Naive thymus-derived CD4-positive, alpha-beta T cell (primary cell): ENCODE measurements at regions of chr2 and their contacts with region 1.

Region 1: DNA sequence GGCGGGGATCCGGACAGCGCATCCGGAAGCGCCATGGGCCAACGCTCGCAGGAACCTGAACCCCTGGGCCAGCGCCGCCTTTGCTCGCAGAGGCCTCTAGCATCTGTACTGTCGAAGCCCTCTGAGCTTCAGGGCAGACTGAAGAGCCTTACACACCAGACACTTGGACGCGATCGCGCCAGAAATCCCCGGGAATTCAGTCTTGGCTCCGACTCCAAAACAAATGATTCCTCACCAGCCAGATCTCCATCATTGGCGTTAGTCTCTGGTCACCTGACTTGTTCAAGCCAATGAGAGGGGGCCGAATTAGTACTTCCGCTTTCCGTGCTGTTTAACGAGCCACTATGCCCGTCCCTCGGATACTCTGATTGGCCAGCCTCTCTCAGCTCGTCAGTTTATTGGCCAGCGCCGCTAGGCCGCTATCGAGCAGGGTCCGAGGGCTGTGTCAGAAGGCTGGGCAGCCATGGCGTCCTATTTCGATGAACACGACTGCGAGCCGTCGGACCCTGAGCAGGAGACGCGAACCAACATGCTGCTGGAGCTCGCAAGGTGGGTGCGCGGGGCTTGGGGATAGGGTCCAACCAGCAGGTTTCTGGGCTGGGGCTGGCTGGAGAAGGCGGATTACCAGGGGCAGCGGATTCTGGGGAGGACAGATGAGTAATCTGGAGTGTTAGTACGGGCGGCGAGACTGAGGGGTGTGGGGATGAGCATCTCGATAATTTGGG is at the start of gene RNF181:
- DNase-seq: peak; percentile 65 to 95 (median 90)
- ATAC-seq: peak; percentile 99
- H3K4me3 ChIP-seq: peak within 1 kb of the TSS; percentile 89
- H3K4me3 Mint-ChIP-seq: peak within 1 kb of the TSS; percentile 93 to 100 (median 98)
- H3K27ac ChIP-seq: peak within 1 kb of the TSS; percentile 88
- H3K27ac Mint-ChIP-seq: peak within 1 kb of the TSS; percentile 93 to 99 (median 97)
- H3K4me1 ChIP-seq: peaks cover 15 to 16% of the 10 kb centered on the region in 2 donors
- H3K4me1 Mint-ChIP-seq: peaks cover 25 to 48% (median 35%) of the 10 kb centered on the region in 7 donors
- H3K27me3 ChIP-seq: no peaks in the 10 kb centered on the region
- H3K27me3 Mint-ChIP-seq: no peaks in the 10 kb centered on the region
- total RNA-seq, gene RNF181: 38.5 to 118 (median 61.4) TPM

Region 2: GRCh38 chr2:84999553-84999955 is 595.9 kb before region 1 on chr2:
- CTCF ChIA-PET with region 1: no interaction called
- POLR2A ChIA-PET with region 1: no interaction called
- intact Hi-C with region 1: no loop called
- DNase-seq: no peak
- ATAC-seq: no peak
- H3K4me3 ChIP-seq: no peak overlapping the region
- H3K4me3 Mint-ChIP-seq: peak overlapping the region in 3 of 10 donors; percentile 23 to 47 (median 30)
- H3K27ac ChIP-seq: no peak overlapping the region
- H3K27ac Mint-ChIP-seq: peak overlapping the region in 7 of 9 donors; percentile 3 to 85 (median 60)
- H3K4me1 ChIP-seq: peaks cover 14 to 16% of the 10 kb centered on the region in 2 donors
- H3K4me1 Mint-ChIP-seq: peaks cover 29 to 82% (median 70%) of the 10 kb centered on the region in 7 donors
- H3K27me3 ChIP-seq: no peaks in the 10 kb centered on the region
- H3K27me3 Mint-ChIP-seq: no peaks in the 10 kb centered on the region

Region 3: GRCh38 chr2:85015653-85016360 is 579.7 kb before region 1 on chr2:
- CTCF ChIA-PET with region 1: no interaction called
- POLR2A ChIA-PET with region 1: no interaction called
- intact Hi-C with region 1: no loop called
- DNase-seq: no peak
- ATAC-seq: no peak
- H3K4me3 ChIP-seq: no peak overlapping the region
- H3K4me3 Mint-ChIP-seq: no peak overlapping the region
- H3K27ac ChIP-seq: peak overlapping the region; percentile 52
- H3K27ac Mint-ChIP-seq: peak overlapping the region in 8 of 9 donors; percentile 1 to 79 (median 60)
- H3K4me1 ChIP-seq: peaks cover 2 to 26% of the 10 kb centered on the region in 2 donors
- H3K4me1 Mint-ChIP-seq: peaks cover 58 to 86% (median 74%) of the 10 kb centered on the region in 7 donors
- H3K27me3 ChIP-seq: no peaks in the 10 kb centered on the region
- H3K27me3 Mint-ChIP-seq: no peaks in the 10 kb centered on the region

Region 4: GRCh38 chr2:85577386-85578242 is 17.8 kb before region 1 on chr2 and contains the start of gene VAMP8:
- CTCF ChIA-PET with region 1: no interaction called
- POLR2A ChIA-PET with region 1: interaction called, 85 read pairs
- intact Hi-C with region 1: loop called in 1 of 2 experiments (anchors 2 kb)
- DNase-seq: peak in 8 of 9 donors; percentile 43 to 61 (median 46)
- ATAC-seq: peak; percentile 82
- H3K4me3 ChIP-seq: peak within 1 kb of the TSS; percentile 78
- H3K4me3 Mint-ChIP-seq: peak within 1 kb of the TSS; percentile 89 to 96 (median 92)
- H3K27ac ChIP-seq: peak within 1 kb of the TSS; percentile 86
- H3K27ac Mint-ChIP-seq: peak within 1 kb of the TSS; percentile 74 to 99 (median 94)
- H3K4me1 ChIP-seq: peaks cover 12 to 28% of the 10 kb centered on the region in 2 donors
- H3K4me1 Mint-ChIP-seq: peaks cover 28 to 47% (median 39%) of the 10 kb centered on the region in 7 donors
- H3K27me3 ChIP-seq: no peaks in the 10 kb centered on the region
- H3K27me3 Mint-ChIP-seq: peaks cover 0 to 2% (median 0%) of the 10 kb centered on the region in 5 donors
- total RNA-seq, gene VAMP8: 55.1 to 137 (median 83.2) TPM

Region 5: DNA sequence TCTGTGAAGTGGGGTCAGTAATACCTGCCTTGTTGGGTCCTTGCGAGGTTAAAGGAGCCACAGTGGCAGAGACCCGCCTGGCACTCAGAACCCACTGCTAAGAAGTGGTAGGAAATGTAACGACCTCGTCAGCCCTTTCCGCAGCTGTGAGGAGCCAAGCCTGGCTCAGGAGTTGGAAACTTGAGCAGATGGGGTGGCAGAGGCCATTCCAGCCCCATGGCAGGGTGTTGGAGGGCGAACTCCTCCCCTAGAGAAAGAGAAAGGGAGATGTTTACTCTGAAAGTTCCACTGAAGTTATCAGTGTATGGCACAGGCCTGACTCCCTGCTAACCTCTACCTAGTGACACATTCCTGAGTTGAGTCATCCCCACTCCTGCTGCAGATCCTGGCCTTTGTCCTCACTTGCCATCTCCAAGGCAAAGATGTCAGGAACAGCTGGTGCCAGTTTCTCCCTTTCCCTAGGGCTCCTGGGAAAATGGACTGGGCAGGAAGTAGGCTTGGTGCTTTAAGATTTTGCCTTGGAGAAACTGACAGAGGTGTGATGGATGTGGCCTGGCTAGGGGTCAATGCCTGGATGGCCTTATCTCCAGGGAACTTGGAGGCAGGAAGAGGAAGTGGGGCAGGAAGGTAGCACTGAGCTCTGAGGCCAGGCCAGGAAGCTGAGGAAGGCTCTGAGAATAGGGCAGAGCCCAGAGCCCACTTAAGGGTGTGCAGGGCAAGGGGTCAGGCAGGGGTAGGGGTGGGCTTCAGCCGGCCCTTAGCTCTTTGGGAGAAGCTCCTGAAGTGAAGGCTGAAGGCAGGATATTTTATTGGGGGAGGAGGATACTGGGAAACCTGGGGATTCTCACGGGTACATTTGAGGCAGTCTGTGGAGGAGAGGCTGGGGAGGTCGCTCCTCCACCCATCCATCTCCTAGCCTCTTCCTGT is 10.3 kb before region 1 on chr2:
- CTCF ChIA-PET with region 1: interaction called, 3 read pairs
- POLR2A ChIA-PET with region 1: interaction called, 85 read pairs
- intact Hi-C with region 1: loop called (anchors 1 kb)
- DNase-seq: peak in 4 of 9 donors; percentile 22 to 40 (median 30)
- ATAC-seq: peak; percentile 47
- H3K4me3 ChIP-seq: peak overlapping the region; percentile 69
- H3K4me3 Mint-ChIP-seq: peak overlapping the region; percentile 79 to 96 (median 88)
- H3K27ac ChIP-seq: peak overlapping the region; percentile 80
- H3K27ac Mint-ChIP-seq: peak overlapping the region; percentile 81 to 93 (median 93)
- H3K4me1 ChIP-seq: peaks cover 19 to 35% of the 10 kb centered on the region in 2 donors
- H3K4me1 Mint-ChIP-seq: peaks cover 47 to 73% (median 65%) of the 10 kb centered on the region in 7 donors
- H3K27me3 ChIP-seq: no peaks in the 10 kb centered on the region
- H3K27me3 Mint-ChIP-seq: no peaks in the 10 kb centered on the region

Region 6: DNA sequence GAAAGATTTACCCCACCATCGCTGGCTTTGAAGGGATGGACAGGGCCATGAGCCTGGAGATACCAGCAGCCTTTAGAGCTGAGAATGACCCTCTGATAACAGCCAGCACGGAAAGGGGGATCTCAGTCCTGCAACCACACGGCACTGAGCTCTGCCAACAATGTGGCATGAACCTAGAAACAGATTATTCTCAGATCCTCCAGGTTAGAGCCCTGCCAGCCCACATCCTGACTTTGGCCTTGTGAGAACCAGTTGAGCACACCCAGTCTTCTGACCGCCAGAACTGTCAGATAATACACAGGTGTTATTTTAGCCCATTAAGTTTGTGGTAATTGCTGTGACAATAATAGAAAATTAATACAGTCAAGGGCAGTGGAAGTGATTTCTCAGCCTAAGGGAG is 89.3 kb after region 1 on chr2:
- CTCF ChIA-PET with region 1: no interaction called
- POLR2A ChIA-PET with region 1: no interaction called
- intact Hi-C with region 1: no loop called
- DNase-seq: no peak
- ATAC-seq: peak; percentile 40
- H3K4me3 ChIP-seq: no peak overlapping the region
- H3K4me3 Mint-ChIP-seq: no peak overlapping the region
- H3K27ac ChIP-seq: no peak overlapping the region
- H3K27ac Mint-ChIP-seq: no peak overlapping the region
- H3K4me1 ChIP-seq: no peaks in the 10 kb centered on the region
- H3K4me1 Mint-ChIP-seq: peaks cover 0 to 22% (median 0%) of the 10 kb centered on the region in 7 donors
- H3K27me3 ChIP-seq: no peaks in the 10 kb centered on the region
- H3K27me3 Mint-ChIP-seq: peaks cover 0 to 10% (median 0%) of the 10 kb centered on the region in 5 donors